ENCODE measurements at regions of chr14 and their contacts with region 1.

Region 1: DNA sequence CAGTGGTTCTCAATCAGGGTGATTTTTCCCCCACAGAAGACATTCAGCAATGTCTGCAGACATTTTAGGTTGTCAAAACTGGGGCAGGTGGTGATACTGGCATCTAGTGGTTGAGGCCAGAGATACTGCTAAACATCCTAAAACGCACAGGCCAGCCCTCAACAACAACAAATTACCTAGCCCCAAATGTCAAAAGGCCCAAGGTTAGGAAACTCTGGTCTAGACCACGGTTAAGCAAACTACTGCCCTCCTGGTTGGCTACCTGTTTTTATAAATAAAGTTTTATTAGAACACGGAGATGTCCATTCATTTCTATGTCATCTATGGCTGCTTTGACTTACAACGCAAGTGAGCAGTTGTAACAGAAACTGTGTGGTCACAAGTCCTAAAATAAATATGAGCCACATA is 186.7 kb downstream of the EFCAB11 start:
- DNase-seq: peak in 1 of 5 donors; percentile 20
- ATAC-seq: peak; percentile 61 to 71 (median 62)
- H3K4me3 ChIP-seq: no peak overlapping the region
- H3K27ac ChIP-seq: no peak overlapping the region
- H3K4me1 ChIP-seq: peaks cover 0 to 11% (median 0%) of the 10 kb centered on the region in 12 donors
- H3K27me3 ChIP-seq: no peaks in the 10 kb centered on the region
- CTCF ChIP-seq: peak; percentile 47 to 71 (median 60)
- POLR2A ChIP-seq: no peak

Region 2: DNA sequence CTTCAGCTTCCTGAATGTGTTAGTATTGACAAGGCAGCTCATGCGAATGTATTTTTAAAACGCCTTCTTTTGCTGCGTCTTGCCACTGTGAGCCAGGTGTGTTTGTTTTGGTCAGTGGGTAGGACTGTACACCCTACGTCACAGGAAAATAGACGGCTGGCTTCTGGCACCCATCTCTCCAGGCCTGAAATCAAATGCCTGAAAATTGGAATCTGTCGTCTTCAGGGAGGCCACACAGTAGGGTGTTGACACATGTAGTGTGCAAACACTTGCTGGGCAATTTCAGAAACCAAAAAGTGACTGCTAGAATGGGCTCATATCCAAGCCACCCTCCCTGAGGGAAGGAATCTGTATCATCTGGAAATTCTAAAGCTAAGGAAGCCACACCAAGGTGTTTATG is 734.1 kb before region 1 on chr14:
- intact Hi-C with region 1: loop called in 4 of 10 experiments (anchors 5 to 10 kb)
- DNase-seq: no peak
- ATAC-seq: no peak
- H3K4me3 ChIP-seq: no peak overlapping the region
- H3K27ac ChIP-seq: no peak overlapping the region
- H3K4me1 ChIP-seq: no peaks in the 10 kb centered on the region
- H3K27me3 ChIP-seq: peaks cover 0 to 21% (median 0%) of the 10 kb centered on the region in 9 donors
- CTCF ChIP-seq: no peak
- POLR2A ChIP-seq: no peak

Region 3: DNA sequence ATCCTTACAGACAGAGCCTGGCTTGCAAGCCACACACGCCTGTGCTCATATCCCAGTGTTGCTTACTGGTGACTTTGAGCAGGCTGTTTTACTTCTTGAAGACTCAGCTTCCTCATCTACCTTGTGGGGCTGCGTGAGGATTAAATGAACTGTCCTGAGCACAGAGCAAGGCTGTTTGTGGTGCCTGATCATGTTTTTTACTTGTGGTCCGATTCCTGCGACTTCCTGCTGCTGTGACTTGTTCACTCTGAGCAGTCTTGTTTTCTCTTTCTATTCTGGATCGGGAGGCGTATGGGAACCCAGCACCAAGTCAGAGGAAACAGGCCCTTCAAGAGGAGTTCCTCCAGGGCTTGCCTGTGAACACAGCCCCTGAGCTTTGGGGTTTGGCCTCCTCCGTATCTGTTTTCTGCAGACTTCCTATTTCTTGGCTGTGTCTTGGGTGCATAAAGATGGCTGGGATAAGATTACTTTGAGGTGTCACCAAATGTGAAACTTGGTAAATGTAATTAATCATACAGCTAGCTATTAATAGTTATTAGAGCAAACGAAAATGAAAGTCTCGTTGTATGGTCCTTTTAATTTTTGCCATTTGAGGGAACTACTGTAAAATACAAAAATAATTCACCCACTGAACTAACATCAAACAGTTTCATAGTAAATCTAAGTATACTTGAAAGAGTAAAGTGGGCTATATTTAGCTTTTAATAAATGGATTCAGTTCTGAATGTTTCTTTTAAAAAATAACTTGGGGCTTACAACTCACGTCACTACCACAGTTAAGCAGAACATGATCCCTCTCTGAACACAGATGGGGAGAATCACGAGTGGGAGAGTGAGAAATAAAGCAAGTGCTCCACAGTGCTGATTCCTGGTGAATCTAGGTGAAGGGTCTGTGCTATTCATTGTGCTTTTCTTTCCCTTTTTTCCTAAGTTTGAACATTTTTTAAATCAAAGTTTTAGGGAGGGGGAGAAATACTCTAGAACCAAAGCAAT is 602.4 kb before region 1 on chr14:
- intact Hi-C with region 1: loop called in 3 of 10 experiments (anchors 10 kb)
- DNase-seq: no peak
- ATAC-seq: peak; percentile 48 to 68 (median 60)
- H3K4me3 ChIP-seq: peak overlapping the region in 10 of 12 donors; percentile 0 to 45 (median 24)
- H3K27ac ChIP-seq: peak overlapping the region in 10 of 12 donors; percentile 23 to 90 (median 41)
- H3K4me1 ChIP-seq: peaks cover 0 to 35% (median 24%) of the 10 kb centered on the region in 12 donors
- H3K27me3 ChIP-seq: no peaks in the 10 kb centered on the region
- CTCF ChIP-seq: no peak
- POLR2A ChIP-seq: no peak

Region 4: GRCh38 chr14:89178802-89179535 is 588.9 kb before region 1 on chr14:
- intact Hi-C with region 1: loop called in 5 of 10 experiments (anchors 5 to 10 kb)
- DNase-seq: no peak
- ATAC-seq: no peak
- H3K4me3 ChIP-seq: no peak overlapping the region
- H3K27ac ChIP-seq: peak overlapping the region in 2 of 12 donors; percentile 19 to 38
- H3K4me1 ChIP-seq: peaks cover 0 to 43% (median 27%) of the 10 kb centered on the region in 12 donors
- H3K27me3 ChIP-seq: no peaks in the 10 kb centered on the region
- CTCF ChIP-seq: no peak
- POLR2A ChIP-seq: no peak

Region 5: GRCh38 chr14:89185919-89186855 is 581.7 kb before region 1 on chr14:
- intact Hi-C with region 1: loop called in 1 of 10 experiments (anchors 5 kb)
- DNase-seq: no peak
- ATAC-seq: peak; percentile 61 to 76 (median 69)
- H3K4me3 ChIP-seq: no peak overlapping the region
- H3K27ac ChIP-seq: peak overlapping the region in 11 of 12 donors; percentile 50 to 80 (median 68)
- H3K4me1 ChIP-seq: peaks cover 4 to 47% (median 35%) of the 10 kb centered on the region in 12 donors
- H3K27me3 ChIP-seq: no peaks in the 10 kb centered on the region
- CTCF ChIP-seq: peak in 1 of 12 donors; percentile 25
- POLR2A ChIP-seq: no peak

Region 6: GRCh38 chr14:89430391-89431236 is 337.3 kb before region 1 on chr14:
- intact Hi-C with region 1: loop called in 3 of 10 experiments (anchors 5 to 10 kb)
- DNase-seq: no peak
- ATAC-seq: peak in 3 of 4 donors; percentile 25 to 53 (median 38)
- H3K4me3 ChIP-seq: peak overlapping the region in 11 of 12 donors; percentile 2 to 54 (median 37)
- H3K27ac ChIP-seq: peak overlapping the region; percentile 28 to 93 (median 64)
- H3K4me1 ChIP-seq: peaks cover 8 to 46% (median 36%) of the 10 kb centered on the region in 12 donors
- H3K27me3 ChIP-seq: no peaks in the 10 kb centered on the region
- CTCF ChIP-seq: no peak
- POLR2A ChIP-seq: no peak

Region 7: DNA sequence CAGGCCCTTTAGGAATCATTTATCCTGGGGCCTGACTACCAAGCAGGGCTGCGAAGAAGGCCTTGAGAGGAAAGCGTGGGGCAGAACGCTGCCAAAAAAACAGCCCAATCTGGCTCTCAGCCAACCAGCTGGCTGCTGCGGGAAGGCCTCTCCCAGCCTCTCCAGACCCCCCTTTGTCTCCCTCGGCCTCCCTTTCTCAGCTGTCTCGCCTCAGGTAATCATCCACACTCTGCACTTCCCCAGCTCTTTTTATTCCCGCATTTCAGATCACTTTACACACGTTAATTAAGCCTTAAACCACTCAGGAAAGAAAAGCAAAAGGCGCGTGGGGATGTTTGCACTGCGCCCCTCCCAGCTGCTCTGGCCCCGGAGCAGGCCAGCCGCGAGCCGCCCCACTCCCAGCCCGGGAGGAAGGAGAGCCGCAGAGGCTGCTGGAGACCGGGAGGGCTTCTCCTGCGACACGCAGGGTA is 142.6 kb before region 1 on chr14:
- intact Hi-C with region 1: loop called in 1 of 10 experiments (anchors 10 kb)
- DNase-seq: peak in 4 of 5 donors; percentile 30 to 58 (median 48)
- ATAC-seq: peak in 3 of 4 donors; percentile 43 to 66 (median 54)
- H3K4me3 ChIP-seq: peak overlapping the region in 4 of 12 donors; percentile 5 to 34 (median 11)
- H3K27ac ChIP-seq: peak overlapping the region in 1 of 12 donors; percentile 55
- H3K4me1 ChIP-seq: peaks cover 0 to 27% (median 8%) of the 10 kb centered on the region in 12 donors
- H3K27me3 ChIP-seq: no peaks in the 10 kb centered on the region
- CTCF ChIP-seq: no peak
- POLR2A ChIP-seq: no peak

Region 8: GRCh38 chr14:89650077-89650978 is 117.5 kb before region 1 on chr14:
- intact Hi-C with region 1: no loop called
- DNase-seq: no peak
- ATAC-seq: no peak
- H3K4me3 ChIP-seq: no peak overlapping the region
- H3K27ac ChIP-seq: no peak overlapping the region
- H3K4me1 ChIP-seq: peaks cover 0 to 3% (median 0%) of the 10 kb centered on the region in 12 donors
- H3K27me3 ChIP-seq: no peaks in the 10 kb centered on the region
- CTCF ChIP-seq: no peak
- POLR2A ChIP-seq: no peak

Measured in heart left ventricle (tissue), 16 donors.